PC-9 (cell line): ENCODE measurements at regions of chr3 and their contacts with region 1.

Region 1: GRCh38 chr3:49358217-49358883 is at the start of gene GPX1:
- DNase-seq: peak; percentile 82 to 97
- H3K4me3 ChIP-seq: peak within 1 kb of the TSS; percentile 80
- H3K27ac ChIP-seq: peak within 1 kb of the TSS; percentile 77
- H3K4me1 ChIP-seq: peaks cover 28% of the 10 kb centered on the region
- H3K27me3 ChIP-seq: no peaks in the 10 kb centered on the region
- CTCF ChIP-seq: no peak
- total RNA-seq, gene GPX1: 386 and 394 TPM in 2 replicates

Region 2: DNA sequence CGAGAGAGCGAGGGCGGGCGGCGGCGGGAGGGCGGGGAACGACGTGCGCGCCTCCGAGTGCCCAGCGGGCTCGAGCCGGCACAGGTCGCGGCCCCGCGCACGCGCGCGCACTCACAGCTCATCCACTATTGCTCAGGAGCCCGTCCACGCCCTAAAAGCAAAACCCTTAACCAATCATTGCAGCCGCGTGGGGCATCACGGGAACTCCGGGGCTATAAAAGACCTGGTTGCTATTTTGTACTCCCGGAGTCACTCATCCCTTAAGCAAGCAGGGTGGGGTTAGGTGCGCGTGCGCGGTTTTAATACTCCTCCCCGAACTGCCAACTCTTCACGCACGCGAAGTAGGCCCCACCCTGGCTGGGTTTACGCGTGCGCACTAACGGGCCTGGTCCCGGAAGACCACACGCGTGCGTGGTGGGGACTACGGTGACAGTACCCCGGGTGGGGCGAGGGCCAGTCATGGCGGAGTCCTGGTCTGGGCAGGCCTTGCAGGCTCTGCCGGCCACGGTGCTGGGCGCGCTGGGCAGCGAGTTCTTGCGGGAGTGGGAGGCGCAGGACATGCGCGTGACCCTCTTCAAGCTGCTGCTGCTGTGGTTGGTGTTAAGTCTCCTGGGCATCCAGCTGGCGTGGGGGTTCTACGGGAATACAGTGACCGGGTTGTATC is 53.8 kb after region 1 on chr3 and contains the starts of genes RHOA and TCTA:
- CTCF ChIA-PET with region 1: interaction called, 3 read pairs
- POLR2A ChIA-PET with region 1: interaction called, 4 read pairs
- intact Hi-C with region 1: loop called (anchors 5 kb)
- DNase-seq: peak; percentile 97
- H3K4me3 ChIP-seq: peak within 1 kb of the TSS; percentile 89
- H3K27ac ChIP-seq: peak within 1 kb of the TSS; percentile 63
- H3K4me1 ChIP-seq: peaks cover 36% of the 10 kb centered on the region
- H3K27me3 ChIP-seq: no peaks in the 10 kb centered on the region
- CTCF ChIP-seq: no peak
- total RNA-seq, gene RHOA: 413 and 416 TPM in 2 replicates
- total RNA-seq, gene TCTA: 17.0 and 17.2 TPM in 2 replicates